ENCODE measurements at regions of chr10 and their contacts with region 1.

Region 1: DNA sequence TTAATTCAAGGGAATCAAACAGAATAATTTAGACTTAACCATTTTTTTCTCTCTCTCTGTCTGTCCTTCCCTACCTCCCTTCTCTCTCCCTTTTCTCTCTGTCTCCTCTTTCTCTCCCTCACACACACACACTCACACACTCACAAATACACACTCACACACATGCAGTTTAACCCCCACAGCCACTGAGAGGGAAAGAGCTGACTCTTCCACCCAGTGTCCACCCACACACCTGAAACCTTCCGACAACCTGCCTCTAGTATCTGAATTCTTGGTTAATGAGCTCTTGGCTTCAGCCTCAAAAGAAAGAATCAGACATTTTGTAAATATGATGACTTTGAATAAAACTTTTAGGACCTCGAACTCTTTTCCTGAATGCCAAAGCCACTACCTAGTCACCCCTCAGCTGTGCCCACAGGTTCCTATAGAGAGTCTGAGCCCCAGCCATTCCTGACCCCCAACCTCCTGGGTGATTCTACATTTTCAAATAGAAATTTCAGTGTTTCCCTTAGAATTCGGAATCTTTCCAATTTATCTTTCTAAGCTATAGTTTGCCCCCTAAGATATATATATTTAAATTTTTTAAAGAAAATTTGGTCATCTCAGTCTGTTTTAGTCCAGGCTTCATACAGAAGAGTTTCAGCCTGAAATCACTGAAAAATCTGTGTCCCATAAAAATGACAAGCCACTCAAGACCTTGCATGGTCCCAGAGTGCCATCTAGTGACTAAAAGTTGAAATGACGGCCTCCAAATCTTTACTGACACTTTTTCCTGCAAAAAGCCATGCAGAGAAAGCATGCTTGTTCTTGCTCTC is 202.8 kb downstream of the IPMK start:
- DNase-seq: peak; percentile 23
- H3K4me3 ChIP-seq: no peak overlapping the region
- H3K27ac ChIP-seq: no peak overlapping the region
- H3K4me1 ChIP-seq: no peaks in the 10 kb centered on the region
- H3K27me3 ChIP-seq: no peaks in the 10 kb centered on the region
- CTCF ChIP-seq: peak; percentile 30 to 38
- POLR2A ChIP-seq: no peak

Region 2: DNA sequence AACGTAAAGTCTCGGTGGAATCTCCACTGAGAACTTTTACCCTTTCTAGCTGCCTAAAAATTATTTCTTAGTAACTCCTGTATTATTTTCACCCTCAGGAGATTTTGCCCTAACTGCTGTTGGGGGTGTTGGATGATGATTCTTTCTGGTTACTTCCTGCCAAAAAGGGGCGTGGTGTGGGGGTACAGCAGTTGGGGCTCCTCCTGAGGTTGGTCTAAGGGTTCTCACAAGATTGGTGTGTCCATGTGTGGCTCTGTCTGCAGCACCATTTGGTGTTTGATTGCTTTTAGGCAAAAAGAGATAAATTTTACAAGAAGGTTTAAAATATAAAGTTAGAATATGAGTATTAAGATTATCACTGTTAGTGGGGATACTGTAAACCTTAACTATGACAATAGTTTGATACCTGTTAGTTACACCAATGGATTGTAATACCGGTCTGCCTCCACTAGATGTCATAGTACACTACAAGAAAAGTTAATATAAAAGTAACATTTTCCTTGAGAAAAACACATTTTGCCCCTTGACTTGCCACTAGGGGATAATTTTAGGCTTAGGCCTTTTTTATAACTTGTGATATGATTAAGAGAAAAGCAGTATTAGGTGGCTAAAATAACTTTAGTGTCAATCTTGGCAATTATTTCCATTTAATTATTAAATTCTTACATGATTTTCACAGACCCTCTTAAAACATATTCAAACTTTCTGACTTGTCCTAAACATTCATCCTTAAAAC is 725.9 kb before region 1 on chr10:
- CTCF ChIA-PET with region 1: no interaction called
- POLR2A ChIA-PET with region 1: no interaction called
- dilution Hi-C with region 1: loop called (anchors 25 kb)
- intact Hi-C with region 1: no loop called
- DNase-seq: peak; percentile 13
- H3K4me3 ChIP-seq: no peak overlapping the region
- H3K27ac ChIP-seq: no peak overlapping the region
- H3K4me1 ChIP-seq: no peaks in the 10 kb centered on the region
- H3K27me3 ChIP-seq: no peaks in the 10 kb centered on the region
- CTCF ChIP-seq: peak; percentile 24 to 35
- POLR2A ChIP-seq: no peak

Region 3: GRCh38 chr10:58028597-58029366 is 36.1 kb before region 1 on chr10:
- CTCF ChIA-PET with region 1: no interaction called
- POLR2A ChIA-PET with region 1: no interaction called
- dilution Hi-C with region 1: no loop called
- intact Hi-C with region 1: no loop called
- DNase-seq: no peak
- H3K4me3 ChIP-seq: no peak overlapping the region
- H3K27ac ChIP-seq: no peak overlapping the region
- H3K4me1 ChIP-seq: peaks cover 3% of the 10 kb centered on the region
- H3K27me3 ChIP-seq: no peaks in the 10 kb centered on the region
- CTCF ChIP-seq: no peak
- POLR2A ChIP-seq: no peak

Region 4: GRCh38 chr10:58698777-58699356 is 633.9 kb after region 1 on chr10:
- CTCF ChIA-PET with region 1: no interaction called
- POLR2A ChIA-PET with region 1: no interaction called
- dilution Hi-C with region 1: no loop called
- intact Hi-C with region 1: no loop called
- DNase-seq: no peak
- H3K4me3 ChIP-seq: no peak overlapping the region
- H3K27ac ChIP-seq: no peak overlapping the region
- H3K4me1 ChIP-seq: no peaks in the 10 kb centered on the region
- H3K27me3 ChIP-seq: no peaks in the 10 kb centered on the region
- CTCF ChIP-seq: no peak
- POLR2A ChIP-seq: no peak